ENCODE measurements at regions of chr1 and their contacts with region 1.

Region 1: GRCh38 chr1:151024540-151025146 is 11.7 kb upstream of the BNIPL start:
- DNase-seq: peak; percentile 91
- ATAC-seq: peak; percentile 100
- H3K4me3 Mint-ChIP-seq: peak overlapping the region; percentile 25
- H3K27ac Mint-ChIP-seq: peak overlapping the region; percentile 52
- H3K4me1 Mint-ChIP-seq: peaks cover 5% of the 10 kb centered on the region
- H3K27me3 Mint-ChIP-seq: no peaks in the 10 kb centered on the region

Region 2: GRCh38 chr1:151013518-151013917 is 11.1 kb before region 1 on chr1:
- CTCF ChIA-PET with region 1: interaction called, 18 read pairs
- DNase-seq: no peak
- ATAC-seq: no peak
- H3K4me3 Mint-ChIP-seq: no peak overlapping the region
- H3K27ac Mint-ChIP-seq: no peak overlapping the region
- H3K4me1 Mint-ChIP-seq: peaks cover 26% of the 10 kb centered on the region
- H3K27me3 Mint-ChIP-seq: no peaks in the 10 kb centered on the region

Region 3: GRCh38 chr1:151036363-151036762 is 11.7 kb after region 1 on chr1 and contains the start of gene BNIPL:
- CTCF ChIA-PET with region 1: interaction called, 14 read pairs
- DNase-seq: no peak
- ATAC-seq: no peak
- H3K4me3 Mint-ChIP-seq: no peak within 1 kb of the TSS
- H3K27ac Mint-ChIP-seq: no peak within 1 kb of the TSS
- H3K4me1 Mint-ChIP-seq: no peaks in the 10 kb centered on the region
- H3K27me3 Mint-ChIP-seq: no peaks in the 10 kb centered on the region
- total RNA-seq, gene BNIPL: 1.0 to 2.0 TPM

Region 4: DNA sequence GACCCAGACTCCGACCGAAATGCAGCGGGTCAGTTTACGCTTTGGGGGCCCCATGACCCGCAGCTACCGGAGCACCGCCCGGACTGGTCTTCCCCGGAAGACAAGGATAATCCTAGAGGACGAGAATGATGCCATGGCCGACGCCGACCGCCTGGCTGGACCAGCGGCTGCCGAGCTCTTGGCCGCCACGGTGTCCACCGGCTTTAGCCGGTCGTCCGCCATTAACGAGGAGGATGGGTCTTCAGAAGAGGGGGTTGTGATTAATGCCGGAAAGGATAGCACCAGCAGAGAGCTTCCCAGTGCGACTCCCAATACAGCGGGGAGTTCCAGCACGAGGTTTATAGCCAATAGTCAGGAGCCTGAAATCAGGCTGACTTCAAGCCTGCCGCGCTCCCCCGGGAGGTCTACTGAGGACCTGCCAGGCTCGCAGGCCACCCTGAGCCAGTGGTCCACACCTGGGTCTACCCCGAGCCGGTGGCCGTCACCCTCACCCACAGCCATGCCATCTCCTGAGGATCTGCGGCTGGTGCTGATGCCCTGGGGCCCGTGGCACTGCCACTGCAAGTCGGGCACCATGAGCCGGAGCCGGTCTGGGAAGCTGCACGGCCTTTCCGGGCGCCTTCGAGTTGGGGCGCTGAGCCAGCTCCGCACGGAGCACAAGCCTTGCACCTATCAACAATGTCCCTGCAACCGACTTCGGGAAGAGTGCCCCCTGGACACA is 23.4 kb after region 1 on chr1:
- CTCF ChIA-PET with region 1: interaction called, 76 read pairs
- DNase-seq: peak; percentile 79
- ATAC-seq: peak; percentile 85
- H3K4me3 Mint-ChIP-seq: peak overlapping the region; percentile 91
- H3K27ac Mint-ChIP-seq: peak overlapping the region; percentile 87
- H3K4me1 Mint-ChIP-seq: peaks cover 36% of the 10 kb centered on the region
- H3K27me3 Mint-ChIP-seq: no peaks in the 10 kb centered on the region

Region 5: DNA sequence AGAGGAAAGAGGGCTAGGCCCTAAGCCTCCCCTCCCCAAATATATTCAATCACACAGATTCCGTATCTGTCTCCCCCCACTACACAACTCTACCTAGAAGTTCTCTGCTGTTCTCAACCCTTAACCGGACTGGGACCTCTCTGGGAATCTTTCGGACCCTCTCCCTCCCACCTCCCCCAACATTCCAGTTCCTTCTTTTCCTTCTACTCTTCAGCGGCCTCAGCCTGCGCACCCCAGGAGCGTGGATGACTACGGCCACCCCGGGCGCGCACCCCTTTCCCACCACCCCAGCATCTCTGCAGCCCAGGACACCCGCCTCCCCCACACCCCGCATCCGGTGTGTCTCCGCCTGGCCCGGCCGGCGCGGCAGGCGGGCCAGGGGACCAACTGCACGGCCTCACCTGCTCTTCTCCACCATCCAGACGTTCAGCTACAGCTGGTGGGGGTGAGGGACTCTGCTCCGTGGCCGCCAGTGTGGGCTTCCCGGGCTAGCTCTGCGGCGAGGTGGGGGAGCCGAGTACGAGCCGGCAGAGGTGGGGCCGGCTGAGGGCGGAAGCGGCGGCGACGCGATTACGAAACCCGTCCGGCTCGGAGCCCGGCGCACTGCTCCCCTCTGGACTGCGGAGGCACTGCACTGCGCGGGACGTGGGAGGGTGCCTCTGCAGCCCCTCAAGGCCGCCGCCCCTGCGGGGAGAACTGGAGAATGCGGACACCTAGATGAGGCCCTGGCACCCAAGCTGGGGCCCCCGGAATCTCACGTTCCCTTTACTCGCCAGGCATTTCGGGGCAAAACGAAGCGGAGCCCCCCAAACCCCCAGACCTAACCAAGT is 34.6 kb after region 1 on chr1 and contains the start of gene CDC42SE1:
- CTCF ChIA-PET with region 1: interaction called, 34 read pairs
- DNase-seq: peak; percentile 92
- ATAC-seq: peak; percentile 80
- H3K4me3 Mint-ChIP-seq: peak within 1 kb of the TSS; percentile 91
- H3K27ac Mint-ChIP-seq: peak within 1 kb of the TSS; percentile 96
- H3K4me1 Mint-ChIP-seq: peaks cover 53% of the 10 kb centered on the region
- H3K27me3 Mint-ChIP-seq: no peaks in the 10 kb centered on the region
- total RNA-seq, gene CDC42SE1: 214 to 235 TPM

Region 6: GRCh38 chr1:151156515-151156819 is 131.8 kb after region 1 on chr1 and contains the start of gene TNFAIP8L2:
- CTCF ChIA-PET with region 1: interaction called, 48 read pairs
- DNase-seq: peak; percentile 90
- ATAC-seq: peak; percentile 92
- H3K4me3 Mint-ChIP-seq: peak within 1 kb of the TSS; percentile 96
- H3K27ac Mint-ChIP-seq: peak within 1 kb of the TSS; percentile 93
- H3K4me1 Mint-ChIP-seq: peaks cover 51% of the 10 kb centered on the region
- H3K27me3 Mint-ChIP-seq: no peaks in the 10 kb centered on the region
- total RNA-seq, gene TNFAIP8L2: 14.5 to 17.6 TPM

Measured in activated CD8-positive, alpha-beta memory T cell treated with anti-CD3 and anti-CD28 coated beads, Interleukin-2, amount 10 ng/mL, durations not matched to agents 7 days and 5 days (primary cell).